Motor neuron (in vitro differentiated cells): ENCODE measurements at regions of chr15 and their contacts with region 1.

Region 1: DNA sequence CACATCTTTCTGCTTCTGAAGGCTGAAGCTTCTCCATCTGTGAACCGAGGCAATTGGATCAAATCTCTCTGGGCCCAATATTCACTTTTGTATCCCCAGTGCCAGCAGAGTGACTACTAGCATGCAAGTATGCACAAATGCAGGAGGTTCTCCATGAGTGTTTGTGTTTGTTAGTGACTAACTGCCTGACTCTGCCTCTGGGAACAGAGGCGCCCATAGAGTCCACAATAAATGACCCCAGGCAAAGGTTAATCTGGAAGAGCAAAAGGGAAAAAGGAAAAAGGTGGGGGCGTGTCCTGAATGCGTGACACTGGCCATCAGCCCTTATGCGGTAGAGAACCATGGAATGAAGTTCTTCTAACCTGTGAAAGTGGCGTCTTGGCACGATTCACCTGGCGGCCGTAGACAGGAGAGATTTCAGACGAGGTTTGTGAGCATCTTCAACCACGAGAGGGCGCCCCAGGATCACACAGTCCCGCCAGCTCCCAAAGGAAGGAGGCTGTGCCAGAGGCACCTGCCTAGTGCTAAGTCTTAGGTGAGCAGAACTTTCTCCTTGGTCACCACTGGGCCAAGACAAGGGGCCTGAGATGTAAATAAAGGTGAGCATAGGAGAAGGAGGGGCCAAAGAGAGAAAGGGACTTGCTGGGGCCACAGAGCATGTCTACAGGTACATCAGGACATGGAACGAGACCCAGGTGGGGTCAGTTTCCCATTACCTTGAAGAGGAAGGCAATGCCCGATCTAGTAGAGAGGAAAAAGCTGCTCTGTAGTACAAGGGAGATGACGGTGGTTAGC is 44.2 kb downstream of the RBPMS2 start:
- ATAC-seq: peak; percentile 75 to 88 (median 84)
- H3K4me3 ChIP-seq: no peak overlapping the region
- H3K27ac ChIP-seq: no peak overlapping the region
- H3K4me1 ChIP-seq: no peaks in the 10 kb centered on the region

Region 2: GRCh38 chr15:64681424-64682024 is 49.7 kb before region 1 on chr15:
- in situ Hi-C with region 1: loop called in 1 of 9 experiments (anchors 5 kb)
- ATAC-seq: peak; percentile 87 to 95 (median 90)
- H3K4me3 ChIP-seq: no peak overlapping the region
- H3K27ac ChIP-seq: no peak overlapping the region
- H3K4me1 ChIP-seq: no peaks in the 10 kb centered on the region

Region 3: GRCh38 chr15:64809649-64810496 is 78.7 kb after region 1 on chr15:
- in situ Hi-C with region 1: loop called in 1 of 9 experiments (anchors 5 kb)
- ATAC-seq: peak; percentile 87 to 92 (median 89)
- H3K4me3 ChIP-seq: no peak overlapping the region
- H3K27ac ChIP-seq: no peak overlapping the region
- H3K4me1 ChIP-seq: peaks cover 0 to 11% of the 10 kb centered on the region in 2 donors

Region 4: GRCh38 chr15:64905119-64905831 is 174.1 kb after region 1 on chr15:
- in situ Hi-C with region 1: loop called in 2 of 9 experiments (anchors 10 to 25 kb)
- ATAC-seq: peak in 5 of 8 experiments; percentile 29 to 91 (median 75)
- H3K4me3 ChIP-seq: no peak overlapping the region
- H3K27ac ChIP-seq: no peak overlapping the region
- H3K4me1 ChIP-seq: no peaks in the 10 kb centered on the region

Region 5: GRCh38 chr15:65208647-65209046 is 477.4 kb after region 1 on chr15:
- in situ Hi-C with region 1: no loop called
- ATAC-seq: peak in 5 of 8 experiments; percentile 55 to 72 (median 65)
- H3K4me3 ChIP-seq: no peak overlapping the region
- H3K27ac ChIP-seq: peak overlapping the region in 1 of 2 donors; percentile 39
- H3K4me1 ChIP-seq: peaks cover 15 to 17% of the 10 kb centered on the region in 2 donors

Region 6: GRCh38 chr15:65326117-65326526 is 594.9 kb after region 1 on chr15:
- in situ Hi-C with region 1: no loop called
- ATAC-seq: peak; percentile 29 to 90 (median 64)
- H3K4me3 ChIP-seq: no peak overlapping the region
- H3K27ac ChIP-seq: peak overlapping the region; percentile 7 to 42
- H3K4me1 ChIP-seq: peaks cover 13 to 21% of the 10 kb centered on the region in 2 donors